Activated naive CD4-positive, alpha-beta T cell treated with anti-CD3 and anti-CD28 coated beads, Interleukin-2, amount 10 ng/mL, durations not matched to agents 7 days and 5 days (primary cell): ENCODE measurements at regions of chr15 and their contacts with region 1.

Region 1: DNA sequence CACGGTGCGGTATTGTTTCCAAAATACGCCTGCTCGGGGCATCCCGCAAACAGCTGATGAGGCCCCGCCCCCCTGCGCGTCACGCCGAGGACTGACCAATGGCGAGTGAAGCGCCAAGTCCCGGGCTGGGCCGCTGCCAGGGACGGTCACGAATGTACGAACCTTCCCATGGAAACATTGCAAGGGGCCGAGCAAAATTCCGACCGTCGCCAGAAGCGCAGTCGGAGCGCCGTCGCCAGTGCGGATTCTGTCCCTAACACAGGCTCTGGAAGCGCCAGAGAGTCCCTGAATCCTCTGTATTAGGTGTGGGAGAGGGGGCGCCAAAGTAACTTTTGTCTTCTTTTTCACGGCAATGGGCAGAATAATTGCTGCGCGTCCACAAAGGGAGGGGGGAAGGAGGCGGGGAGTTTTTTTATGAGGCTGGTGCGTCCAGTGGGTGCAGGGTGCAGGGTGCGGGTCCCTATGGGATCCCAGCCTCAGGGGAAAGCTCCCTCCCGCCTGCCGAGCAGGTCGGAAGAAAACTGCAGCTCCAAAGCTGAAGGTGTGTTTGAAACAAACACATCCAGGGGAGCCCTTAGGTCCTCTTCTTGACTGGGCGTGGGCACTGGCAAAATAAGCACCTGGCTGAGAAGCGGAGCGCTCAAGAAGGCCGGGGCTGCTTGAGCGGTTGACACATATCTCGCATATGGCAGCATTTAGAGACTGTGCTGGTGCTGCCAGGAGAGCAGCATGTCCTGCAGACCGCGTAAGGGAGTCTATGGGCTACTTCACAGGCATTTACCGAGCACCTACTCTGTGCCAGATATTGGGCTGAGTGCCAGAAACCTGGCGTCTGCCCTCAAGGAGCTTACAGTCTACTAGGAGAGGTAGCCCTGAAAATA is at the start of gene BMF:
- DNase-seq: peak; percentile 99
- H3K4me3 Mint-ChIP-seq: peak within 1 kb of the TSS; percentile 90
- H3K27ac Mint-ChIP-seq: peak within 1 kb of the TSS; percentile 84
- H3K4me1 Mint-ChIP-seq: peaks cover 53% of the 10 kb centered on the region
- H3K27me3 Mint-ChIP-seq: peaks cover 64% of the 10 kb centered on the region

Region 2: GRCh38 chr15:40044717-40045571 is 64.2 kb before region 1 on chr15:
- CTCF ChIA-PET with region 1: interaction called, 255 read pairs
- DNase-seq: peak; percentile 89
- H3K4me3 Mint-ChIP-seq: peak overlapping the region; percentile 19
- H3K27ac Mint-ChIP-seq: peak overlapping the region; percentile 74
- H3K4me1 Mint-ChIP-seq: peaks cover 84% of the 10 kb centered on the region
- H3K27me3 Mint-ChIP-seq: no peaks in the 10 kb centered on the region

Region 3: GRCh38 chr15:40082195-40082883 is 26.8 kb before region 1 on chr15:
- CTCF ChIA-PET with region 1: interaction called, 11 read pairs
- DNase-seq: no peak
- H3K4me3 Mint-ChIP-seq: no peak overlapping the region
- H3K27ac Mint-ChIP-seq: no peak overlapping the region
- H3K4me1 Mint-ChIP-seq: peaks cover 36% of the 10 kb centered on the region
- H3K27me3 Mint-ChIP-seq: peaks cover 66% of the 10 kb centered on the region

Region 4: GRCh38 chr15:40098489-40099261 is 10.4 kb before region 1 on chr15:
- CTCF ChIA-PET with region 1: interaction called, 59 read pairs
- DNase-seq: peak; percentile 86
- H3K4me3 Mint-ChIP-seq: peak overlapping the region; percentile 54
- H3K27ac Mint-ChIP-seq: peak overlapping the region; percentile 98
- H3K4me1 Mint-ChIP-seq: peaks cover 90% of the 10 kb centered on the region
- H3K27me3 Mint-ChIP-seq: no peaks in the 10 kb centered on the region

Region 5: DNA sequence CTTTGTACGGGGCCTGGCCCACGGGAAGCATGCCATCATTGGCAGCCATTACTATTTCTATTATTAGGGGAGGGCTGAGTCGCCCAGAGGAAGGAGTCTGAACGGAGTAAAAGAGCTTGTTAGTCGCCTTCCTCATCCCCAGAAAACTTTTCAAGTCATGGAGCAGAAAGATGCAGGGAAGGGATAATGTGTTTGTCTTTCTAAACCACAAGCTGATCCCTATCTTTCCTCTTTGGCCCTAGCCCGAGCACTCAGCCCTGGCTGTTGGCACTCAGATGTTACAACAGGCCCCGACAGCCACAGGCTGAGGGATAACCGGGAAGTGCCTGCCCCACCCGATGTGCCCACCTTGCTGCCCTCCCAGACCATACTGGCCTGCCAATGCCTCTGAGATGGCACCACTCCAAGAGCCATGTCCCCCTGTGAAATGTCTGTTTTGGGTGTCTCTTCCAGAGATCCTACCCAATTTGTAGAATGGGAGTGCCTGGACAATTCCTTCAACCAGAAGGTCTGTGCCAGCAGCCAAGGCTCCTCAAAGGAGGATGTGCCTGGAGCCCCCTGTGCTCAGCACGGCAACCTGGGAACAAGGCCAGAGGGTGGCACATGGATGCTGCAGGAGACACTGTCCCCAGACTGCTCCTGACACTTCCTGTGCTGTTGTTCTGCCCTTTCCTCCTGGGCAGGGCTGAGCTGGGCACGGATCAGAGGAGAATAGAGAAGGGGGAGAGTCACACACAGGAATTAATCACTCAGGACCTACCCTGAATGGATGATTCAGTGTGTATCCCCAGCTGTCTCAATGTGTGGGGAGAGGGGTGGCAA is 140.6 kb after region 1 on chr15:
- CTCF ChIA-PET with region 1: no interaction called
- DNase-seq: no peak
- H3K4me3 Mint-ChIP-seq: no peak overlapping the region
- H3K27ac Mint-ChIP-seq: no peak overlapping the region
- H3K4me1 Mint-ChIP-seq: peaks cover 6% of the 10 kb centered on the region
- H3K27me3 Mint-ChIP-seq: peaks cover 89% of the 10 kb centered on the region